Caco-2 (cell line): ENCODE measurements at regions of chr2 and their contacts with region 1.

Region 1: DNA sequence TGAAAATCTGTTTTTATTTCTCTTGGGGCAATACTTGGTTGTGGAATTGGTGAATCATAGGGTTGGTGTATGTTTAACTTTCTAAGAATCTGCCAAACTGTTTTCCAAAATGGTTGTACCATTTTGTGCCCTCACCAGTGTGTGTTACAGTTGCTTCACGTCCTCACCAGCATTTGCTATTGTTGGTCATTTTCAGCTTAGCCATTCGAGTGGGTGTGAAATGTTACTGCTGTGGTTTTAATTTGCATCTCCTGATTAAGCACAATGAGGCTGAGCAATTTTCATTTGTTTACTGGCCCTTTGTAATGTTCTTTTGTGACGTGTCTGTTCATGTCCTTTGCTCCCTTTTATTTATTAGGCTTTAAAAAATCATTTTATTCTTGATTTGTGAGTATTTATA is 49.7 kb downstream of the FOSL2 start:
- DNase-seq: no peak
- H3K4me3 ChIP-seq: no peak overlapping the region
- H3K4me3 Mint-ChIP-seq: no peak overlapping the region
- H3K27ac Mint-ChIP-seq: no peak overlapping the region
- H3K4me1 ChIP-seq: peaks cover 9% of the 10 kb centered on the region; the same call in 1 of the 2 replicates
- H3K4me1 Mint-ChIP-seq: no peaks in the 10 kb centered on the region
- H3K27me3 ChIP-seq: no peaks in the 10 kb centered on the region
- H3K27me3 Mint-ChIP-seq: no peaks in the 10 kb centered on the region
- CTCF ChIP-seq: no peak

Region 2: GRCh38 chr2:27737676-27738348 is 704.5 kb before region 1 on chr2:
- CTCF ChIA-PET with region 1: interaction called, 12 read pairs
- POLR2A ChIA-PET with region 1: no interaction called
- intact Hi-C with region 1: no loop called
- DNase-seq: peak in 1 of 2 experiments; percentile 79
- H3K4me3 ChIP-seq: no peak overlapping the region
- H3K4me3 Mint-ChIP-seq: peak overlapping the region; percentile 66
- H3K27ac Mint-ChIP-seq: peak overlapping the region; percentile 90
- H3K4me1 ChIP-seq: peaks cover 27% of the 10 kb centered on the region
- H3K4me1 Mint-ChIP-seq: peaks cover 27% of the 10 kb centered on the region
- H3K27me3 ChIP-seq: no peaks in the 10 kb centered on the region; the same call in 1 of the 2 replicates
- H3K27me3 Mint-ChIP-seq: no peaks in the 10 kb centered on the region
- CTCF ChIP-seq: no peak